CD4-positive, alpha-beta T cell (primary cell): ENCODE measurements at regions of chr9 and their contacts with region 1.

Region 1: GRCh38 chr9:3768698-3769458 is 243.1 kb upstream of the RFX3 start:
- DNase-seq: no peak
- ATAC-seq: no peak
- H3K4me3 ChIP-seq: no peak overlapping the region
- H3K4me3 Mint-ChIP-seq: no peak overlapping the region
- H3K27ac ChIP-seq: no peak overlapping the region
- H3K27ac Mint-ChIP-seq: no peak overlapping the region
- H3K4me1 ChIP-seq: no peaks in the 10 kb centered on the region
- H3K4me1 Mint-ChIP-seq: no peaks in the 10 kb centered on the region
- H3K27me3 ChIP-seq: peaks cover 0 to 9% of the 10 kb centered on the region in 2 experiments
- H3K27me3 Mint-ChIP-seq: peaks cover 6% of the 10 kb centered on the region
- CTCF ChIP-seq: no peak

Region 2: DNA sequence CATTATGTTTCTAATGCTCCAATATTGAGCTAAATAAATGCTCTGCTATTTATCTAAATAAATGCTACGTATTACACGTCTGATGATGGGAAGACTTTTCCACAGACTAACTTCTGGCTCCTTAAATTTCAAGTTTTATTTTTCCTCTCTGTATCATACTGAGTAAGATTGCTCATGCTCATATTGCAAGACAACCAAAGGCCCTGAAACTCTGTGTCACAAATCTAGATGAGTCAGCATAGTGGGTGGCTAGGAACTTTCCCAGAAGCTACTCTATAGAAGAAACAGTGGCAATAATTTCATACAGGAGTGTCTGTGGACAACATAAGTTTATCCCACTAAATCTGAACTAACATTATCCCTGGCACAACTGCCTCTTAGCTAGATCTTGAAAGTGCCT is 190.1 kb before region 1 on chr9:
- CTCF ChIA-PET with region 1: no interaction called
- POLR2A ChIA-PET with region 1: no interaction called
- intact Hi-C with region 1: no loop called
- DNase-seq: peak in 2 of 14 experiments; percentile 13 to 34
- ATAC-seq: no peak
- H3K4me3 ChIP-seq: no peak overlapping the region
- H3K4me3 Mint-ChIP-seq: no peak overlapping the region
- H3K27ac ChIP-seq: no peak overlapping the region
- H3K27ac Mint-ChIP-seq: no peak overlapping the region
- H3K4me1 ChIP-seq: no peaks in the 10 kb centered on the region
- H3K4me1 Mint-ChIP-seq: no peaks in the 10 kb centered on the region
- H3K27me3 ChIP-seq: no peaks in the 10 kb centered on the region
- H3K27me3 Mint-ChIP-seq: no peaks in the 10 kb centered on the region
- CTCF ChIP-seq: no peak

Region 3: DNA sequence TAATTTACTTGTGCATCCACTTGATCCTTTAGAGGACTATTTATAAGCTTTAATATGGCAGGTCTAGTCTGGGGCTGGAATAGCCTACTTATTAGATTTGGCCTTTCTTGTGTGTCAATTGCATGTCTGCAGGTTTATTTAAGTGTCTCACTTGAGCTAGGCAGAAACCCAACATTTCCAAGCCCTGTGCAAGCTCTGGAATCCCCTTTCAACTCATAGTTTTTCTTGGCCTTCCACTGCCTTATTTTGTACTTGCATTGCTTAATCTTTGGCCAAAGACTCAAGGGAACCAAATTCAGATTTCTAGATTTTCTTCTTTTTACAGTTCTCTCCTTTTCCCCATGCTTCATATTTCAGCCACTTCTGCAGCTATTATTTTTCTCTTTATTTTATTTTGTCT is 140.6 kb before region 1 on chr9:
- CTCF ChIA-PET with region 1: no interaction called
- POLR2A ChIA-PET with region 1: no interaction called
- intact Hi-C with region 1: no loop called
- DNase-seq: no peak
- ATAC-seq: no peak
- H3K4me3 ChIP-seq: no peak overlapping the region
- H3K4me3 Mint-ChIP-seq: no peak overlapping the region
- H3K27ac ChIP-seq: no peak overlapping the region
- H3K27ac Mint-ChIP-seq: no peak overlapping the region
- H3K4me1 ChIP-seq: no peaks in the 10 kb centered on the region
- H3K4me1 Mint-ChIP-seq: no peaks in the 10 kb centered on the region
- H3K27me3 ChIP-seq: no peaks in the 10 kb centered on the region
- H3K27me3 Mint-ChIP-seq: no peaks in the 10 kb centered on the region
- CTCF ChIP-seq: no peak

Region 4: GRCh38 chr9:3746296-3747275 is 22.3 kb before region 1 on chr9:
- CTCF ChIA-PET with region 1: no interaction called
- POLR2A ChIA-PET with region 1: no interaction called
- intact Hi-C with region 1: loop called in 1 of 2 experiments (anchors 2 kb)
- DNase-seq: no peak
- ATAC-seq: no peak
- H3K4me3 ChIP-seq: no peak overlapping the region
- H3K4me3 Mint-ChIP-seq: no peak overlapping the region
- H3K27ac ChIP-seq: no peak overlapping the region
- H3K27ac Mint-ChIP-seq: no peak overlapping the region
- H3K4me1 ChIP-seq: no peaks in the 10 kb centered on the region
- H3K4me1 Mint-ChIP-seq: no peaks in the 10 kb centered on the region
- H3K27me3 ChIP-seq: no peaks in the 10 kb centered on the region
- H3K27me3 Mint-ChIP-seq: no peaks in the 10 kb centered on the region
- CTCF ChIP-seq: no peak

Region 5: GRCh38 chr9:3823842-3824475 is 55.1 kb after region 1 on chr9:
- CTCF ChIA-PET with region 1: no interaction called
- POLR2A ChIA-PET with region 1: no interaction called
- intact Hi-C with region 1: loop called in 1 of 2 experiments (anchors 5 kb)
- DNase-seq: no peak
- ATAC-seq: no peak
- H3K4me3 ChIP-seq: no peak overlapping the region
- H3K4me3 Mint-ChIP-seq: no peak overlapping the region
- H3K27ac ChIP-seq: no peak overlapping the region
- H3K27ac Mint-ChIP-seq: no peak overlapping the region
- H3K4me1 ChIP-seq: no peaks in the 10 kb centered on the region
- H3K4me1 Mint-ChIP-seq: no peaks in the 10 kb centered on the region
- H3K27me3 ChIP-seq: no peaks in the 10 kb centered on the region
- H3K27me3 Mint-ChIP-seq: no peaks in the 10 kb centered on the region
- CTCF ChIP-seq: no peak

Region 6: DNA sequence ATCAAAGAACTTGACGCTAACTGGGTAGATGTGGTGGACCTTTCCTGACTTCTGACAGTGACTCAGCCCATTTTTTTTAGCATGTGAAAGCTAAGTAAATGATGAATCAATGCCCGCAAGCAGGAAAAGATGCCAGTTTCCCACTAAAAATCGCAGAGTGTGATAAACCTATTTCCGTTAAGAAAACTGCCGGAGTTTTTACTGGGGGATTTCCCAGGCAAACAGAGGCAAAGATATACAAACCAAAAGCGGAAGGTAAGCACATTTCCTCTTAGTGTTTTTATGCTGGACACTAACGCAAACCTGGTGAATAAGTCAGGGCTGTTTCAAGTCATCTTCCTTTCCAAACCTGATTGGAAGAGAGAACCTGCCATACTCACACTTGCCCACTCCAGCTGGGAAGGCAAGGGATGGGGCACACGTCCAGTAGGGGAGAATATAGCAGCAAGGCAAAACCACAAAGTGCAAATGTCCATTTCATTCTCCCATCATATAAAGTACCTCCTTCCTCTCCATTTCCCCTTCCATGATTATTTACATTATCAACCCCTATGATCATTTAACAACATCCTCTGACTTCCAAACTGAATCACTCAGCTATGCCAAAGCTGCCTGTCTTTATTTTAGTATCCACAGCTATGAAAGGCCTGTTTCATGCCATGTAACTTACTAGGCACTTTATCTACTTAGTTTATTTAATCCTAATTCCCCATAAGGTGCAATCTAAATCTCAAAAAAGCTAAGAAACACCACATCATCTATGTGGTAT is 106.7 kb after region 1 on chr9:
- CTCF ChIA-PET with region 1: no interaction called
- POLR2A ChIA-PET with region 1: no interaction called
- intact Hi-C with region 1: no loop called
- DNase-seq: peak in 2 of 14 experiments; percentile 1 to 4
- ATAC-seq: no peak
- H3K4me3 ChIP-seq: no peak overlapping the region
- H3K4me3 Mint-ChIP-seq: no peak overlapping the region
- H3K27ac ChIP-seq: no peak overlapping the region
- H3K27ac Mint-ChIP-seq: no peak overlapping the region
- H3K4me1 ChIP-seq: no peaks in the 10 kb centered on the region
- H3K4me1 Mint-ChIP-seq: no peaks in the 10 kb centered on the region
- H3K27me3 ChIP-seq: no peaks in the 10 kb centered on the region
- H3K27me3 Mint-ChIP-seq: peaks cover 4% of the 10 kb centered on the region
- CTCF ChIP-seq: no peak